ENCODE measurements at regions of chr6 and their contacts with region 1.

Region 1: GRCh38 chr6:24933868-24934401 is 1.8 kb downstream of the RIPOR2 start:
- DNase-seq: peak; percentile 59
- ATAC-seq: no peak
- H3K4me3 Mint-ChIP-seq: peak overlapping the region; percentile 93
- H3K27ac Mint-ChIP-seq: peak overlapping the region; percentile 95
- H3K4me1 Mint-ChIP-seq: peaks cover 88% of the 10 kb centered on the region
- H3K27me3 Mint-ChIP-seq: no peaks in the 10 kb centered on the region

Region 2: DNA sequence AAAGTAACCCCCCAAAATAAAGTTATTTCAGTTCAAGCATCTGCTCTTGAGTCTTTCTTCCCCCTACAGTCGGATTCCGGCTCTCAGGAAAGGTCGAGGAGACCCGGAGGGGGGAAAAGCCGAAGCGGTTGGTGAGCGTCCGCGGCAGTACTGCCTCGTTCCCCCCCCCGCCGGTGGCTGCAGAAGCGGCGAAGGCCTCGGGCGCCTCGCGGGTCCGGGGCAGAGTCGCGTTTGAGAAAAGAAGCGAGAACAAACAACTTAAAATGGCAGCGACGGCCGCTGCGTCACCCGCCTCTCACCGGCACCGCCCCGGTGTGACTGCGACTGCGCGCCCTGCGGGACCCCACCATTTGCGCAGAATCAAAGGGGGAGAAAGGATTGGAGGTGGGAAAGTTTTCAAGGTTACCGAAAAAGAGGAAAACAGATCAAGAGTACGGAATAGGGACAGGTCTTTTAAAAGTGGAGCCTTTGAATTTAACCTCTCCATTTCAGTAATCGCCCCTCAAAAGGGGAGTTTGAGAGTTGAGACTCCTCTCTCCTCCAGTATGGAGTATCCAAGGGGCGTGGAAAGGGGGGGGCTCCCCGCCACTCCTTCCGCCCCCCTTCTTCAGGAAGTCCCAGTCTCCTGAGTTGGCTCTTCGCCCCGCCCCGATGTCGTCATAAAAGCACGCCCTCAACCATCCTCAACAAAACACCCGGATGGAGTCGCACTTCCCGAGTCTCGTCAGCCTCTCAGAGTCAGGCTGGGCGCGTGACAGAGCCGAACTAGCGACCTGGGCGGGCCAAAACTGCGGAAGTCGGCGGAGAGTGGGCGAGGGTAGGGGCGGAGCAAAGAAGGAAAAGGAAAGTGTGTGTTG is 213.1 kb before region 1 on chr6:
- CTCF ChIA-PET with region 1: no interaction called
- POLR2A ChIA-PET with region 1: no interaction called
- intact Hi-C with region 1: loop called (anchors 2 to 10 kb)
- DNase-seq: peak; percentile 100
- ATAC-seq: peak; percentile 88
- H3K4me3 Mint-ChIP-seq: peak overlapping the region; percentile 99
- H3K27ac Mint-ChIP-seq: peak overlapping the region; percentile 98
- H3K4me1 Mint-ChIP-seq: peaks cover 32% of the 10 kb centered on the region
- H3K27me3 Mint-ChIP-seq: no peaks in the 10 kb centered on the region

Region 3: DNA sequence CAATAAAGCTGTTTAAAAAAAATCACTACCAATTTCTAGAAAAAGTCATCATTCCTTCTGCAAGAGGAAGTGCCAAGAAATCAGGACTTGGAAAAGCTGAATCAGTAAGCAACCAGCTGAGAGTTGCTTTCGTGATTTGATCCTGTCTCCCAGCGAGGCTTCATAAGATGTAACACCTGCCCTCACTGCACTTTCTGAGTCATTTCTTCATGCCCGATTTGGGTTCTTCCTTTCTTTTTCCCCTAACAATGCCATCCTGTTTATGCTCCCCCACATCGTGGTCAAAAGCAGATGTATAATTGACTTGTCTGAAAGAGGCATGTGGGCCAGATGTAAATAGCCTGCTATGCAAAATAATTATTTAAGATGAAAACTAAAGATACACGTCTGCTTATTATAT is 50.3 kb before region 1 on chr6:
- CTCF ChIA-PET with region 1: interaction called, 23 read pairs
- POLR2A ChIA-PET with region 1: interaction called, 3 read pairs
- intact Hi-C with region 1: loop called in 1 of 2 experiments (anchors 2 kb)
- DNase-seq: peak; percentile 69
- ATAC-seq: peak; percentile 85
- H3K4me3 Mint-ChIP-seq: peak overlapping the region; percentile 72
- H3K27ac Mint-ChIP-seq: peak overlapping the region; percentile 100
- H3K4me1 Mint-ChIP-seq: peaks cover 88% of the 10 kb centered on the region
- H3K27me3 Mint-ChIP-seq: no peaks in the 10 kb centered on the region

Region 4: GRCh38 chr6:24910961-24911712 is 22.8 kb before region 1 on chr6:
- CTCF ChIA-PET with region 1: interaction called, 135 read pairs
- POLR2A ChIA-PET with region 1: interaction called, 4 read pairs
- intact Hi-C with region 1: loop called in 1 of 2 experiments (anchors 1 kb)
- DNase-seq: peak; percentile 80
- ATAC-seq: peak; percentile 8
- H3K4me3 Mint-ChIP-seq: peak overlapping the region; percentile 85
- H3K27ac Mint-ChIP-seq: peak overlapping the region; percentile 90
- H3K4me1 Mint-ChIP-seq: peaks cover 83% of the 10 kb centered on the region
- H3K27me3 Mint-ChIP-seq: no peaks in the 10 kb centered on the region

Region 5: GRCh38 chr6:24960991-24961475 is 27.1 kb after region 1 on chr6:
- CTCF ChIA-PET with region 1: interaction called, 19 read pairs
- POLR2A ChIA-PET with region 1: interaction called, 3 read pairs
- intact Hi-C with region 1: no loop called
- DNase-seq: no peak
- ATAC-seq: peak; percentile 45
- H3K4me3 Mint-ChIP-seq: peak overlapping the region; percentile 24
- H3K27ac Mint-ChIP-seq: peak overlapping the region; percentile 86
- H3K4me1 Mint-ChIP-seq: peaks cover 74% of the 10 kb centered on the region
- H3K27me3 Mint-ChIP-seq: no peaks in the 10 kb centered on the region

Region 6: GRCh38 chr6:25006565-25007001 is 72.6 kb after region 1 on chr6:
- CTCF ChIA-PET with region 1: interaction called, 7 read pairs
- POLR2A ChIA-PET with region 1: interaction called, 3 read pairs
- intact Hi-C with region 1: loop called in 1 of 2 experiments (anchors 2 kb)
- DNase-seq: peak; percentile 62
- ATAC-seq: peak; percentile 58
- H3K4me3 Mint-ChIP-seq: peak overlapping the region; percentile 32
- H3K27ac Mint-ChIP-seq: peak overlapping the region; percentile 79
- H3K4me1 Mint-ChIP-seq: peaks cover 83% of the 10 kb centered on the region
- H3K27me3 Mint-ChIP-seq: no peaks in the 10 kb centered on the region

Region 7: DNA sequence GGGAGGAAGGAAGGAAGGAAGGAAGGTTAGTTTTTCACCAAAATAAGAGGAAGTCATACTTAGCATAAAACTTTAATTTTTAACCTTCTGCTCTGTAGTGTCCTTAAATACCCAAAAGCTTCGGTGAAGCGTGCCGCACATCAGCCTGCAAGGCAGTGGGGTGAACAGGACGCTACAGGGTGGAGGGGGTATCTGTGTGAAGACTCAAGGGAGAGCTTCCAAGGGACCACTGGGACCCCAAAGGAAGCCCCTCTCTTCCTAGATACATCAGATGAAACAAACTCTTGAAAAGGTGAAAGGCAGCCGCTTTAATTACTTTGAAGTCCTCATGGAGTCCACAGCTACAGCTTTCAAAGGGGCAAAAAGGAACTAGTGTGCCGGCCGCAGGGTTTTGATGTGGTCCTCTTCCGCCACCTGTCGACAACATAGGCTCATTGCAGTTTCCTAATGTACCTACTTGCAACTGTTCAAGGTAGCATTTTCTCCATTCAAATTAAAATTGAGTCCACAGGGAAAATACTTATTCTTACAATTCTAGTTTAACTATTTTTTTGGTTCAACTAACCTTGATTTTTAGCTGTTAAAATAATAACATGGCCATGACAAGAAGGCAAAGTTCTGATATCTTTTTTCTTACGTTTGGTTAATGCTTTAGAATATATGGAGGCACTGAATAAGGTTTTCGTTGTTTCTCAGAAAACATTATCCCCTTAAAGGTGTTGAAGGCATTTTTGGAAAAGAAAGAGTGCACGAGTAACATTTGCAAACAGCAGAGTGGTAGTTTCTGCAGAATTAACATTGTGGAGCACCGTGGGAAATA is 136.8 kb after region 1 on chr6:
- CTCF ChIA-PET with region 1: interaction called, 8 read pairs
- POLR2A ChIA-PET with region 1: no interaction called
- intact Hi-C with region 1: loop called in 1 of 2 experiments (anchors 2 kb)
- DNase-seq: peak; percentile 88
- ATAC-seq: peak; percentile 94
- H3K4me3 Mint-ChIP-seq: no peak overlapping the region
- H3K27ac Mint-ChIP-seq: peak overlapping the region; percentile 47
- H3K4me1 Mint-ChIP-seq: peaks cover 4% of the 10 kb centered on the region
- H3K27me3 Mint-ChIP-seq: no peaks in the 10 kb centered on the region

Region 8: DNA sequence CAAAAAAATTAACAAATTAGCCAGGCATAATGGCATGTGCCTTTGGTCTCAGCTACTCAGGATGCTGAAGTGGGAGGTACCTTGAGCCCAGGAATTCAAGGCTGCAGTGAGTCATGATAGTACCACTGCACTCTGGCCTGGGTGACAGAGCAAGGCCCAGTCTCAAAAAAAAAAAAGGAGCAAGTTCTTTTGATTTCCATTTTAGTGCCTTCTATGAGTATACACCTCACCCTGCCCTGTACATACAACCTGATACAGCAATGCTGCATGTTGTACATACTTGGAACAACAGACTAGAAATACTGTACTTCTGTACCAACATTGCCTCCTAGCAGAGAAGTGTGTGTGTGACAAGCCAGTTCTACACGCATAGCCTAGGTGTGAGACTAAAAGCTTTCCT is 248.0 kb after region 1 on chr6:
- CTCF ChIA-PET with region 1: no interaction called
- POLR2A ChIA-PET with region 1: no interaction called
- intact Hi-C with region 1: no loop called
- DNase-seq: no peak
- ATAC-seq: peak; percentile 66
- H3K4me3 Mint-ChIP-seq: no peak overlapping the region
- H3K27ac Mint-ChIP-seq: no peak overlapping the region
- H3K4me1 Mint-ChIP-seq: peaks cover 27% of the 10 kb centered on the region
- H3K27me3 Mint-ChIP-seq: no peaks in the 10 kb centered on the region